ENCODE measurements at regions of chr11 and their contacts with region 1.

Region 1: DNA sequence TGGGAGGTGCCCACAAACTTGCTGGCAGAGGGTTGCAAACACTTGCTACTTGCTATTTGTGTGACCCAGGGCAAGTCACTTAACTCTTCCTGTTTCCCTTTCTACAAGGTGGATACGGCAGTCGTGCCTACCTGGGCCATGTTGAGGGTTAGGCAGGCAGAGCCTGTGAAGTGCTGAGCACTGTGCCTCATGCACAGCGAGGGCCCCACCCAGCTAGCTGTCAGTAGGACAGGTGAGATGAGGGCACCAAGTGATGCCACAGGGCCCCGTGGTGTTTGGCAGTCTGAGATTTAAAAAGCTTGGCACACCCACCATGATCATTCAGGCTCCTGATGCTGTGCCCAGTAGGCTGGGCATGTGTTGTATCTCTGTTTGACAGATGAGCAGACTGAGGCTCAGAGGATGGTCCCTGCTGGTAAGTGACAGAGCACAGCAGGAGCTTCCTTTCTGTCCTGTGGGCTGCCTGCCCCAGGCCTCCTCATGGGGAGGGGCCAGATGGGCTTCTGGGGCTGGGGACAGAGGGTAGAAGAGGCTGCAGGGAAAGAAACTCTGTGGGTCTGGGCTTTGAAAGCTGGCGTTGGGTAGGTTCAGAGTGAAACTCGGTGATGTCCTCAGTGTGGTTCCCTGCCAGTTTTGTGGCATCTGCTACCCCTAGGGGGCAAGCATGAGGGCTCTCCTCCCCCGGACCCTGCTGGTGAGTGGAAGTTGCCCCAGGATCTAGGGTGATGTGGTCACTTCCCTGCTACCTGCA is 59.3 kb downstream of the TSPAN18 start:
- DNase-seq: peak; percentile 91
- H3K4me3 ChIP-seq: no peak overlapping the region
- H3K27ac ChIP-seq: no peak overlapping the region
- H3K4me1 ChIP-seq: peaks cover 52% of the 10 kb centered on the region
- H3K27me3 ChIP-seq: no peaks in the 10 kb centered on the region
- CTCF ChIP-seq: peak; percentile 55

Region 2: GRCh38 chr11:44804449-44805437 is 18.7 kb after region 1 on chr11:
- CTCF ChIA-PET with region 1: interaction called, 10 read pairs
- POLR2A ChIA-PET with region 1: no interaction called
- intact Hi-C with region 1: no loop called
- DNase-seq: no peak
- H3K4me3 ChIP-seq: no peak overlapping the region
- H3K27ac ChIP-seq: no peak overlapping the region
- H3K4me1 ChIP-seq: peaks cover 6% of the 10 kb centered on the region
- H3K27me3 ChIP-seq: no peaks in the 10 kb centered on the region
- CTCF ChIP-seq: no peak